Naive thymus-derived CD4-positive, alpha-beta T cell (primary cell): ENCODE measurements at regions of chr3 and their contacts with region 1.

Region 1: DNA sequence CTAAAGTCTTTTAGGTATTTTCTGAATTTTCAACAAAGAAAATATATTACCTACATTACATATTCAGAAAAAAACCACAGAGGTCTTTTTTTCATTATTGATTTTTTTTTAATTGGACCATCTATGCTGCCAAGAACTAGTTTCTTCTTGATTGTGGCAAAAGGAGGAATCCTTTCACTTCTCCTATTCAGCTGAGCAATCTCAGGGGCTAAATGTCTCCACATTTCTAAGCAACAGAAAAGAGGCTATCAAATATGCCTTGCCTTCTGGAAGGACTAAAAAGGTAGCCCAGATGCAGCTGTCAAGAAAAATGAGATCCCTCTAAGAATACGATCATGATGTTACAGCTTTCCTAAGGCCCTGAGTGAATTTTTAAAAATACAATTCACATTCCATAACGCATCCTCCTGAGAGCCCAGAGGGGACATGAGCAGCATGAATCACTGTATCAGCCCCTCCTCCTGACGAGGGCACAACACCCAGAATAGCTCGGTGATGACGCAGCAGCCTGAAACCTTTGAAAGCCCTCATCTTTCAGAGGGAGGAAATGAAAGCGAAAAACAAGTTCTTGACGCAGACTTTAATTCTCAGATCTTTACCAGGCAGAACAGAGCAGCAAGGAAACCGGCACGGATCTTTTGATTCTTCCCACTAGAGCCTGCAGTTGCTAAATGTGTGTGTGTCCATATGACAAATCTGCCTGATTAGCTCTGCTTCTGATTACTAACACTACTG is 24.6 kb downstream of the RUBCN start:
- DNase-seq: peak; percentile 56 to 95 (median 91)
- ATAC-seq: peak; percentile 99
- H3K4me3 ChIP-seq: peak overlapping the region; percentile 58
- H3K4me3 Mint-ChIP-seq: peak overlapping the region; percentile 65 to 92 (median 80)
- H3K27ac ChIP-seq: peak overlapping the region; percentile 82
- H3K27ac Mint-ChIP-seq: peak overlapping the region; percentile 91 to 99 (median 97)
- H3K4me1 ChIP-seq: peaks cover 14 to 15% of the 10 kb centered on the region in 2 donors
- H3K4me1 Mint-ChIP-seq: peaks cover 7 to 37% (median 26%) of the 10 kb centered on the region in 7 donors
- H3K27me3 ChIP-seq: no peaks in the 10 kb centered on the region
- H3K27me3 Mint-ChIP-seq: no peaks in the 10 kb centered on the region

Region 2: GRCh38 chr3:197590313-197590962 is 121.7 kb before region 1 on chr3:
- CTCF ChIA-PET with region 1: no interaction called
- POLR2A ChIA-PET with region 1: no interaction called
- intact Hi-C with region 1: no loop called
- DNase-seq: no peak
- ATAC-seq: no peak
- H3K4me3 ChIP-seq: no peak overlapping the region
- H3K4me3 Mint-ChIP-seq: peak overlapping the region in 1 of 10 donors; percentile 39
- H3K27ac ChIP-seq: no peak overlapping the region
- H3K27ac Mint-ChIP-seq: peak overlapping the region in 1 of 9 donors; percentile 92
- H3K4me1 ChIP-seq: no peaks in the 10 kb centered on the region
- H3K4me1 Mint-ChIP-seq: peaks cover 0 to 54% (median 17%) of the 10 kb centered on the region in 7 donors
- H3K27me3 ChIP-seq: no peaks in the 10 kb centered on the region
- H3K27me3 Mint-ChIP-seq: peaks cover 0 to 4% (median 0%) of the 10 kb centered on the region in 5 donors

Region 3: DNA sequence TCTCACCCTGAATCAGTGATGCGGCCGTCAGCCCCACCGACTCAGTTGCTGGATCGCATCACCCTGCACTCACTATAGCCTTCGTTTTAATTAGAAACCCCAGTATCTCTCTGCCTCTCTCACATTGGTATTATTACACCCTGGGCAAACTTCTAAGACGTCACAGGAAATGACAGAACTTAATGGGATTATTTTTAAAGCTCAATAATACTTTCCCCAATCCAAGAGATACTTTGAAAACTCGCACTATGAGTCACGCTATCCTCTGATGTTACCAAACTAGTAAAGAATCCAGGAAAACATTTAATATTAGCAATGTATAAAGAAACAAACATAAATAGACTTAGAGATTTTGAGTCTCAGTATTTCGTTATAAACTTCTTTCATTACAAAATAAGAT is 12.0 kb before region 1 on chr3:
- CTCF ChIA-PET with region 1: interaction called, 4 read pairs
- POLR2A ChIA-PET with region 1: interaction called, 18 read pairs
- intact Hi-C with region 1: no loop called
- DNase-seq: no peak
- ATAC-seq: no peak
- H3K4me3 ChIP-seq: no peak overlapping the region
- H3K4me3 Mint-ChIP-seq: no peak overlapping the region
- H3K27ac ChIP-seq: no peak overlapping the region
- H3K27ac Mint-ChIP-seq: no peak overlapping the region
- H3K4me1 ChIP-seq: no peaks in the 10 kb centered on the region
- H3K4me1 Mint-ChIP-seq: peaks cover 0 to 9% (median 0%) of the 10 kb centered on the region in 7 donors
- H3K27me3 ChIP-seq: no peaks in the 10 kb centered on the region
- H3K27me3 Mint-ChIP-seq: no peaks in the 10 kb centered on the region

Region 4: DNA sequence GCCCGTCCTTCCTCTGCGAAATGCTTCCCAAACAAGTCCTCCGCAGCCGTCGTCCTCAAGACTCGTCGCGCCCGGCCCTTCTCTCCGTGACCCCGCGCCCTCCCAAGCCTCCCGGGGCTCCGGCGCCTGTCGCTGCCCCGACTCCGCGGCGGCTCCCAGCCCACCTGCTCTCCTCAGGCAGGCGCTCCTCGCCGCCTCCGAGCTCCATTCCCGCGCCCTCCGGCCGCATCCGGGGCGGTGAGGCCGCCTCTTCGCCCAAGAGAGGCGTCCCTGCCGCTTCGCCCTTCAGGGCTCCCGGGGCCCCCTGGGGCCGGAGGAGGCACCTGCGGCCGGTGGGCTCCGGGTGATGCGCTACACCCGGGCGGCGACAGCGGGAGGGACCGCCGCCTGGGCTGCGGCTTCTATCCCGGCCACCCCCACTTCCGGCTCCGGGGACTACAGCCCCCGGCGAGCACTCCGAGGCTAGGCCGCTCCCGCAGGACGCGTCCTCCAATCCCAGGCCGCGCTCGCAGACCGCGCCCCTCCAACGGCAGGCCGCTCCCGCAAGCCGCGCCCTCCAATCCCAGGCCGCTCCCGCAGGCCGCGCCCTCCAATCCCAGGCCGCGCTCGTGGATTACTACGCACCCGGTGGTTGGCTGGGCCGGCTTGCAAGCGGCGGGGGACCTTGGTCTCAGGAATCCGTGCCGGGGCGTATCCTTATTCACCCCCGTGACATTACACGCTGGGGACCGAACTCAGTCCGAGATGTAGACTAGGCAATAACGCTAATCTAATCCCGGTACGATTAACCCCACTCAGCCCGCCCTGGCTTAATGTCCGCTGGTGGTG is 24.6 kb after region 1 on chr3 and contains the start of gene RUBCN:
- CTCF ChIA-PET with region 1: no interaction called
- POLR2A ChIA-PET with region 1: interaction called, 26 read pairs
- intact Hi-C with region 1: loop called (anchors 1 kb)
- DNase-seq: peak; percentile 81 to 95 (median 93)
- ATAC-seq: peak; percentile 98
- H3K4me3 ChIP-seq: peak within 1 kb of the TSS; percentile 67
- H3K4me3 Mint-ChIP-seq: peak within 1 kb of the TSS; percentile 82 to 99 (median 96)
- H3K27ac ChIP-seq: peak within 1 kb of the TSS; percentile 83
- H3K27ac Mint-ChIP-seq: peak within 1 kb of the TSS; percentile 89 to 99 (median 97)
- H3K4me1 ChIP-seq: peaks cover 9 to 10% of the 10 kb centered on the region in 2 donors
- H3K4me1 Mint-ChIP-seq: peaks cover 29 to 52% (median 32%) of the 10 kb centered on the region in 7 donors
- H3K27me3 ChIP-seq: no peaks in the 10 kb centered on the region
- H3K27me3 Mint-ChIP-seq: no peaks in the 10 kb centered on the region
- total RNA-seq, gene RUBCN: 43.3 to 61.7 (median 52.9) TPM

Region 5: GRCh38 chr3:197989651-197990050 is 277.5 kb after region 1 on chr3:
- CTCF ChIA-PET with region 1: no interaction called
- POLR2A ChIA-PET with region 1: no interaction called
- intact Hi-C with region 1: no loop called
- DNase-seq: no peak
- ATAC-seq: no peak
- H3K4me3 ChIP-seq: no peak overlapping the region
- H3K4me3 Mint-ChIP-seq: no peak overlapping the region
- H3K27ac ChIP-seq: no peak overlapping the region
- H3K27ac Mint-ChIP-seq: no peak overlapping the region
- H3K4me1 ChIP-seq: no peaks in the 10 kb centered on the region
- H3K4me1 Mint-ChIP-seq: no peaks in the 10 kb centered on the region
- H3K27me3 ChIP-seq: no peaks in the 10 kb centered on the region
- H3K27me3 Mint-ChIP-seq: no peaks in the 10 kb centered on the region